HCT116 (cell line): ENCODE measurements at regions of chr3 and their contacts with region 1.

Region 1: DNA sequence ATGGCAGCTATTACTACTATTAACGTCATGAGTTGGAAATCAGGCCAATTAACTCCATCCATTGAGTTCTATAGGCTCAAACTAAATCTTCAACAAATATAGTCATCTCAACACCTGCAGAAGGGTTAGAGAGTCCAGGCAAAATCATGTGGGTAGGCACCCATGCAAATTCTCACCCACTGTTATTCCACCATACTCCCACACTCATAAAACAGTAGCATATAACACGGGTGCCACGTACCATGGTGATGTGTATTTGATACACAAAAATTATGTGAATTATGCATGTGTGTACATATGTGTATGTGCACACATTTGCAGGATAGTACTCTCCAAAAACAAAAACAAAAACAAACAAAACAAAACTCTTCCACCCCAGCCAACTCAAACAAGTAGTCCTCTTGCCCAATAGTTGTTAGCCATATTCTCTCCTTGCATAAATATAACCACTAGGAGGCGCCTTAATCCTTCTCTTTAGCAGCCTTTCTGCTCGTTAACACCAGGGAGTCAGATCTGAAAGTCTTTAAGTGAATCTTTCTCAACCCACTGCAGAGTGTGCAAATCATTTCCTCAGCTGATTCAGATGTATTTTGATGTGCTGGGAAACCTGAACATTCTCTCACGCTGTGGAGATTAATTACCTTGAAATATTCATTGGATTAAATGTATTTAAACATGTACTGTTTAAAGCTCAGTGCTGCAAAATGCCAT is 38.0 kb upstream of the COPB2 start:
- DNase-seq: peak; percentile 60
- ATAC-seq: peak; percentile 89
- H3K4me3 ChIP-seq: no peak overlapping the region
- H3K27ac ChIP-seq: no peak overlapping the region
- H3K4me1 ChIP-seq: no peaks in the 10 kb centered on the region
- H3K27me3 ChIP-seq: no peaks in the 10 kb centered on the region
- CTCF ChIP-seq: peak; percentile 71 to 92 (median 86)
- POLR2A ChIP-seq: no peak
- RAD21 ChIP-seq: peak; percentile 95

Region 2: GRCh38 chr3:139117883-139118760 is 309.3 kb before region 1 on chr3:
- CTCF ChIA-PET with region 1: no interaction called
- POLR2A ChIA-PET with region 1: no interaction called
- RAD21 ChIA-PET with region 1: no interaction called
- intact Hi-C with region 1: no loop called
- DNase-seq: no peak
- ATAC-seq: no peak
- H3K4me3 ChIP-seq: no peak overlapping the region
- H3K27ac ChIP-seq: no peak overlapping the region
- H3K4me1 ChIP-seq: peaks cover 21 to 57% of the 10 kb centered on the region in 2 experiments
- H3K27me3 ChIP-seq: no peaks in the 10 kb centered on the region
- CTCF ChIP-seq: no peak
- POLR2A ChIP-seq: no peak
- RAD21 ChIP-seq: no peak

Region 3: GRCh38 chr3:139230391-139230790 is 197.0 kb before region 1 on chr3:
- CTCF ChIA-PET with region 1: no interaction called
- POLR2A ChIA-PET with region 1: no interaction called
- RAD21 ChIA-PET with region 1: no interaction called
- intact Hi-C with region 1: no loop called
- DNase-seq: no peak
- ATAC-seq: no peak
- H3K4me3 ChIP-seq: no peak overlapping the region
- H3K27ac ChIP-seq: no peak overlapping the region
- H3K4me1 ChIP-seq: peaks cover 0 to 5% of the 10 kb centered on the region in 2 experiments; a peak in 1 of 4 replicates
- H3K27me3 ChIP-seq: no peaks in the 10 kb centered on the region
- CTCF ChIP-seq: no peak
- POLR2A ChIP-seq: no peak
- RAD21 ChIP-seq: no peak

Region 4: DNA sequence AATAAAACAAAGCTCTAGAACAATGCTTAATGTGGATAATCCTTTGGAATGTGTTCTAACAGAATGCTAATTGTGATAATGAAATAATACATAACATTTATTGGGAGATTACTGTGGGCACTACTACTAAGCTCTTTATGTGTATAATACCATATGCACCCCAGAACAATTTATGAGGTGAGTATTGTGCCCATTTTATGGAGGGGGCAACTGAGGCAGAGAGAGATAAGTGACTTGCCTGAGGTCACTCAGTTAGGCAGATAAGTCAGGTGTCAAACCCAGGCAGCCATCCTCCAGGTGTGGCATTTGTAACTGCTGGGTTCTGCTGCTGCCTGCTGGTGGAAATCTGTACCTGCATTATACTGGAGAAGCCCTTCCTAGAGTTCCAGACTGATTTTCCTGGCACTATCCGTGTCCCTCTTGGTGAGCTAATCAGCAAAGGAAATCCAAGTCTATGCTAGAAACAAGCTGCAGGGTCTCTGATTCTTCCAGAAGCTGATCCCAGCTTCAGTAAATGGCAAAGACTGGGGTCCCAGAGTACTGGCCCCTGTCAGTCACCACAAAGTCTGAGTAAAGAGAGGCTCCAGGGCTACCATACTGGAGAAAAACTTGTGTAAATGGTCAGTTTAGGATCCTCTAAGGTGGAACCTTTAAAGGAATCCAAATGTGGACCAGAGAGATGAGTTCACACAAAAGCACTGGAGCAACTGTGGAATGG is 134.7 kb after region 1 on chr3:
- CTCF ChIA-PET with region 1: interaction called, 40 read pairs
- POLR2A ChIA-PET with region 1: no interaction called
- RAD21 ChIA-PET with region 1: interaction called, 6 read pairs
- intact Hi-C with region 1: loop called (anchors 1 kb)
- DNase-seq: peak; percentile 56
- ATAC-seq: peak; percentile 95
- H3K4me3 ChIP-seq: no peak overlapping the region
- H3K27ac ChIP-seq: no peak overlapping the region
- H3K4me1 ChIP-seq: no peaks in the 10 kb centered on the region
- H3K27me3 ChIP-seq: no peaks in the 10 kb centered on the region
- CTCF ChIP-seq: peak; percentile 73 to 90 (median 86)
- POLR2A ChIP-seq: no peak
- RAD21 ChIP-seq: peak; percentile 97

Region 5: DNA sequence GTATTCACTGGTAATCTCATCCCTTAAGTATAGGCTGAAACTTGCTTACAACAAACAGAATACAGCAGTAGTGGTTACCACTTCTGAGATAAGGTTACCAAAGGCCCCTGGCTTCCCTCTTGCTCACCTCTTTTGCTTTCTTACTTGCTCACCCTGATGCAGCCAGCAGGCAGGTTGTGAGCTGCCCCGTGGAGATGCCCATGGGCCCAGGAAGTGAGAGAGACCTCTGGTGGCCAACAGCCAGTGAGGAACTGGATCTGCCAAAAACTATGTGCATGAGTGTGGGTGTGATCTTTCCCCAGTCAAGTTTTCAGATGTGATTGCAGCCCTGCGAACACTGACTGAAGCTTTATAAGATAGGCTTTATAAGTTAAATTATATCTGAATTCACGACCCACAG is 201.6 kb after region 1 on chr3:
- CTCF ChIA-PET with region 1: no interaction called
- POLR2A ChIA-PET with region 1: no interaction called
- RAD21 ChIA-PET with region 1: no interaction called
- intact Hi-C with region 1: loop called (anchors 2 kb)
- DNase-seq: peak; percentile 18
- ATAC-seq: peak; percentile 99
- H3K4me3 ChIP-seq: no peak overlapping the region
- H3K27ac ChIP-seq: no peak overlapping the region
- H3K4me1 ChIP-seq: peaks cover 0 to 3% of the 10 kb centered on the region in 2 experiments; a peak in 1 of 4 replicates
- H3K27me3 ChIP-seq: no peaks in the 10 kb centered on the region
- CTCF ChIP-seq: peak; percentile 46 to 68 (median 64); a peak in 5 of 6 replicates
- POLR2A ChIP-seq: no peak
- RAD21 ChIP-seq: peak; percentile 42; the same call in 1 of the 2 replicates

Region 6: DNA sequence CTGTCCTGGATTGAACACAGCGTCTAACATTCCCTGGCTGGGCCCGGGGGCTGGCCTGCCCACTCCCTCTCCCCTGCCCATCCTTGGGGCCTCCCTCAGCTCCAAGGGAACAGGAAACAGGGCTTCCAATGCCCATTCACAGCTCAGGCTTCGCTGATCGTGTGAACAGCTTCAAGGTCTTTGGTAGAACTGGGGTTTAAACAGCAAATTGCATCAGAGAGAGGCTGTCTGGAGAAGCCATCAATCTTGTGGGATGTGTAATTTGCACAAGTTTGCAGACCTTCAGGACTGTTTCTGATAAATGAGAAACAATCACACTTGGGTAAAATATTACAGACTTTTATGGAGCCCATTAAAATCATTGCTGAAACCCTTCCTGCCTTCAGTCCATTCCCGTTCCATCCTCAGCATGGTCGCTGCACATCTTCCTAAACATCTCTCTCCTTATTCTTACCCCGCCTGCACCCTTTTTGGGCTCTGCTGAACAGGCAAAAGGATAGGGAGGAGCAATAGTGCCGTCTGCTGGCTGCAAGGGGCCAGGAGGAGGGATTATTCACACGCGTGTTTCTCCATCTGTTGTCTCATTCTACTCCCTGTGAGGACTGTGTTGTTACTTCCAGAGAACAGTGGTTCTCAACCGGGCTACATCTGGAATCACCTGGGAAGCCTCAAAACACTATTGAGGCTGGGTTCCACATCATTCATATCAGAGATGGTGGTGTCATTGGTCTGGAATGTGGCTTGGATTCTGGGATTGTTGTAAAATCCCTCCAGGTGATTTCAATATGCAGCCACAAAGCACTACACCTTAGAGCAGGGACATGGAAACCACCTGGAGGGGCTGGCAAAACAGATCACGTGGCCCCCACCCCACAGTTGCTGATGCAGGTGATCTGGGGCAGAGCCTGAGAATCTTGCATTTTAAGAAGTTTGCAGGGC is 623.9 kb after region 1 on chr3:
- CTCF ChIA-PET with region 1: interaction called, 3 read pairs
- POLR2A ChIA-PET with region 1: no interaction called
- RAD21 ChIA-PET with region 1: no interaction called
- intact Hi-C with region 1: loop called (anchors 10 kb)
- DNase-seq: peak; percentile 21
- ATAC-seq: peak; percentile 83; the same call in 1 of the 2 replicates
- H3K4me3 ChIP-seq: no peak overlapping the region
- H3K27ac ChIP-seq: no peak overlapping the region
- H3K4me1 ChIP-seq: no peaks in the 10 kb centered on the region
- H3K27me3 ChIP-seq: peaks cover 41% of the 10 kb centered on the region
- CTCF ChIP-seq: peak; percentile 50 to 65 (median 62); a peak in 5 of 6 replicates
- POLR2A ChIP-seq: no peak
- RAD21 ChIP-seq: peak; percentile 70